Activated CD4-positive, alpha-beta T cell treated with anti-CD3 and anti-CD28 coated beads for 36 hours (primary cell): ENCODE measurements at regions of chrX and their contacts with region 1.

Region 1: GRCh38 chrX:74286950-74287740 is 16.8 kb upstream of the ZCCHC13 start:
- DNase-seq: no peak
- ATAC-seq: no peak
- H3K4me3 Mint-ChIP-seq: no peak overlapping the region
- H3K27ac Mint-ChIP-seq: no peak overlapping the region
- H3K4me1 Mint-ChIP-seq: peaks cover 27% of the 10 kb centered on the region
- H3K27me3 Mint-ChIP-seq: no peaks in the 10 kb centered on the region

Region 2: GRCh38 chrX:74248889-74249288 is 38.3 kb before region 1 on chrX:
- CTCF ChIA-PET with region 1: interaction called, 3 read pairs
- POLR2A ChIA-PET with region 1: no interaction called
- intact Hi-C with region 1: loop called in 1 of 2 experiments (anchors 5 kb)
- DNase-seq: no peak
- ATAC-seq: no peak
- H3K4me3 Mint-ChIP-seq: no peak overlapping the region
- H3K27ac Mint-ChIP-seq: no peak overlapping the region
- H3K4me1 Mint-ChIP-seq: peaks cover 5% of the 10 kb centered on the region
- H3K27me3 Mint-ChIP-seq: no peaks in the 10 kb centered on the region